ENCODE measurements at regions of chr20 and their contacts with region 1.

Region 1: DNA sequence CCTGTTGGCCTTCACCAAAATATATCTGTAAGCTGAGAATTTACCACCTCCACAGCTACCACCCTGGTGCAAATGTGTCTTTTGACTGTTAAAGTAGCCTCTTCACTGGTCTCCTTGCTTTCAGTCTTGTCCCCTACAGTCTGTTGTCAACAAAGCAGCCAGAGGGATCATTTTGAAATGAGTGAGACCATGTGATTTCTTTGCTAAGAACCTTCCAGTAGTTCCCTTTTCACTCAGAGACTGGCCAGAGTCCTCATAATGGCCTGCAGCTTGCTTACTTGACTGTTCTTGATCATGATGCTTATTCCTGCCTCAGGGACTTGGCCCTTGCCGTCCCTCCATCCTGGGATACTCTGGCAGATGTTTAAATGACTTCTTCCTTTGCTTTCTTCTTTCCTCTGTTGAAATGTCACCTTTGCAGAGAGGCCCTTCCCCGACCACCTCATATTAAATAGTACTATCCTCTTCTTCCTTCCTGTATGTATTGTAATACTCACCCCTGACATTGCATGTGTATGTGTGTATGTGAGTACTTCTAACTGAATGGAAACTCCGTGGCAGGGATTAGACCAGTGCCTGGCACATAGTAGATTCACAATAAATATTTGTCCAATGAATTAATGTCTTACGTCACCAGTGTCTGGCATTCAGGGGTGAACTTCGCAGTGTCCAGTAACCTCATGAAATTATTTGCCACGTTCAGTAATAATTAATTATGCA is 5.0 kb downstream of the MANBAL start:
- DNase-seq: no peak
- H3K4me3 ChIP-seq: no peak overlapping the region
- H3K4me3 Mint-ChIP-seq: no peak overlapping the region
- H3K27ac Mint-ChIP-seq: no peak overlapping the region
- H3K4me1 ChIP-seq: no peaks in the 10 kb centered on the region; the same call in 1 of the 2 replicates
- H3K4me1 Mint-ChIP-seq: peaks cover 16% of the 10 kb centered on the region
- H3K27me3 ChIP-seq: no peaks in the 10 kb centered on the region
- H3K27me3 Mint-ChIP-seq: no peaks in the 10 kb centered on the region
- CTCF ChIP-seq: no peak

Region 2: DNA sequence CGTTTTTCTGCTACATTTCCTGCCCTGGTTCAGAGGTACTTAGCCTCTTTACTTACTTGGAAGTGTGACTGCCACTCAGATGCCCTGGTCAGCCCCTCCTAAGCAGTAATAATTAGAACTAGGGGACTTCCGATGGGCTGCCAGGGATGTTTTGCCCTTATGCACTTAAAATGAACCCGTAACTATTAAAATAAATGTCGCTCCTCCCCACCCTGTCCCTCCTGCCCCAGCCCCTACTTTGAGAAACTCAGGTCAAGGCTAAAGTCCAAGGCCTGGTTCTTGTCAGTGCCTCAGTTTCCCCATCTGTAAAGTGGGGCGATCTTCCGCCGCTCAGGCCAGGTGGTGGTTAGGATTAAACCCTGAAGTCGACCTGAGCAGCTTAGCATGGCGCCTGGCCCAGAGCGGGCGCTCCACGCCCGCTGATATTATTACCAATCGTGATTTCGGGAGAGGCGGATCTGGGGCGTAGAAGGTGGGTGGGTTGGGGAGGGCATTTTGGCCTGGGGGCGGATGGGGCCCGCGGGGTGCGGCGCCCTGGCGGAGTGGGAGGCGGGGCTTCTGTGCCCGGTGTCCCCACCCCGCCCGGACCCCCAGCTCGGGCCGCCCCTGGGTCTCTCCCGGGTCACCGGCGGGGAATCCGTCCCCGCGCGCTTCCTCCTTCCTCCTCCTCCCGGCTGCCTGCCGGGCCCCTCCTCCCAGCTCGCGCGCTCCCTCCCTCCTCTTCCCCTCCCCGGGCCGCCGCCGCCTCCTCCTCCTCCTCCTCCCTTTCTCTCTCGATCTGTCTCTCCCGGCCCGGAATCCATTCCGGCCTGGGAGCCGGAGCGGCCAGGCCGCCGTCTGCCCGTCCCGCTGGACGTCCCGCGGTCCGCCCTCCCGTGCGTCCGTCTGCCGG is 51.2 kb after region 1 on chr20 and contains the start of gene SRC:
- CTCF ChIA-PET with region 1: no interaction called
- POLR2A ChIA-PET with region 1: interaction called, 45 read pairs
- intact Hi-C with region 1: loop called (anchors 1 kb)
- DNase-seq: peak in 1 of 2 experiments; percentile 73
- H3K4me3 ChIP-seq: peak within 1 kb of the TSS; percentile 46
- H3K4me3 Mint-ChIP-seq: peak within 1 kb of the TSS; percentile 90
- H3K27ac Mint-ChIP-seq: peak within 1 kb of the TSS; percentile 98
- H3K4me1 ChIP-seq: peaks cover 50% of the 10 kb centered on the region
- H3K4me1 Mint-ChIP-seq: peaks cover 41% of the 10 kb centered on the region
- H3K27me3 ChIP-seq: no peaks in the 10 kb centered on the region
- H3K27me3 Mint-ChIP-seq: no peaks in the 10 kb centered on the region
- CTCF ChIP-seq: no peak
- total RNA-seq, gene SRC: 197 and 222 TPM in 2 replicates

Region 3: GRCh38 chr20:37396416-37397075 is 102.1 kb after region 1 on chr20:
- CTCF ChIA-PET with region 1: no interaction called
- POLR2A ChIA-PET with region 1: no interaction called
- intact Hi-C with region 1: loop called (anchors 5 kb)
- DNase-seq: peak in 1 of 2 experiments; percentile 61
- H3K4me3 ChIP-seq: no peak overlapping the region
- H3K4me3 Mint-ChIP-seq: no peak overlapping the region
- H3K27ac Mint-ChIP-seq: peak overlapping the region; percentile 2
- H3K4me1 ChIP-seq: peaks cover 16% of the 10 kb centered on the region
- H3K4me1 Mint-ChIP-seq: peaks cover 10% of the 10 kb centered on the region
- H3K27me3 ChIP-seq: no peaks in the 10 kb centered on the region
- H3K27me3 Mint-ChIP-seq: no peaks in the 10 kb centered on the region
- CTCF ChIP-seq: no peak

Region 4: GRCh38 chr20:38127011-38127621 is 832.7 kb after region 1 on chr20:
- CTCF ChIA-PET with region 1: no interaction called
- POLR2A ChIA-PET with region 1: no interaction called
- intact Hi-C with region 1: no loop called
- DNase-seq: peak in 1 of 2 experiments; percentile 37
- H3K4me3 ChIP-seq: no peak overlapping the region
- H3K4me3 Mint-ChIP-seq: no peak overlapping the region
- H3K27ac Mint-ChIP-seq: no peak overlapping the region
- H3K4me1 ChIP-seq: peaks cover 23% of the 10 kb centered on the region
- H3K4me1 Mint-ChIP-seq: peaks cover 36% of the 10 kb centered on the region
- H3K27me3 ChIP-seq: no peaks in the 10 kb centered on the region
- H3K27me3 Mint-ChIP-seq: no peaks in the 10 kb centered on the region
- CTCF ChIP-seq: no peak